MCF 10A (cell line): ENCODE measurements at regions of chr9 and their contacts with region 1.

Region 1: DNA sequence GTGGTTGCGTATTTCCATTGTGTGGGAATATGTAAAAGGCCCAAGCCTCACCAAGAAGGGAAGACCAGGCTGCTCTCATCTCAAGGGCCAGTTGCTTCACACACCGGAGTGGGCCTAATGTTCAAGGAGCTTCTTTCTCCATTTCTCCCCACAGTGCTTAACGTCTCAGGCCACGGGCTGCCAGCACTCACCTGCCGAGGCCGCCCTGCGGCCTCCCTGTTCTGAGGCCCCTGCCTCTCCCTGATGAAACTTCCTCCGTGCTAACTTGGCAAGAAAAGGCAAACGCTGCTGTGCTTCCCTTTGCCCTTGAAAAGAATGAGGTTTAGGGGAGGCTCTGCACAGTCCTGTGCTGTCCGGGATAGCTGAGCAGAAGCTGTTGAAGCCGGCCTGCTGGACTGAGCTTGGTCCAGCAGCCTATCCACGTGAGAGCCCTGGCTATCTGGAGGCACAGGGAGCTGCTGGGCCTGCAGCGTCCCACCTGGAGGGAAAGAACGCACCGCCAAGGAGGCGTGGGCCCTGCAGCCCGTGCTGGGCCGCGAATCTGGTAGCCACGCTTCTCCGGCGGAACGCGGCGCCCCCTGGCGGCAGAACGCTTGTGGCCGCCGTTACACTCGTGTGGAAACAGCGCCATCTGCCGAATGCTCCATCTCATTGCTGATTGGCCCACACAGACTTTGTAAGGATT is 73.5 kb upstream of the PRSS3 start:
- DNase-seq: peak; percentile 82
- H3K4me3 Mint-ChIP-seq: no peak overlapping the region
- H3K27ac Mint-ChIP-seq: no peak overlapping the region
- H3K4me1 Mint-ChIP-seq: no peaks in the 10 kb centered on the region
- H3K27me3 Mint-ChIP-seq: peaks cover 24% of the 10 kb centered on the region
- CTCF ChIP-seq: peak; percentile 100

Region 2: GRCh38 chr9:33225319-33226149 is 496.3 kb before region 1 on chr9:
- CTCF ChIA-PET with region 1: interaction called, 4 read pairs
- POLR2A ChIA-PET with region 1: no interaction called
- intact Hi-C with region 1: loop called (anchors 2 kb)
- DNase-seq: peak; percentile 83
- H3K4me3 Mint-ChIP-seq: no peak overlapping the region
- H3K27ac Mint-ChIP-seq: no peak overlapping the region
- H3K4me1 Mint-ChIP-seq: peaks cover 33% of the 10 kb centered on the region
- H3K27me3 Mint-ChIP-seq: no peaks in the 10 kb centered on the region
- CTCF ChIP-seq: peak; percentile 52

Region 3: GRCh38 chr9:33524306-33524947 is 197.4 kb before region 1 on chr9:
- CTCF ChIA-PET with region 1: interaction called, 9 read pairs
- POLR2A ChIA-PET with region 1: no interaction called
- intact Hi-C with region 1: loop called (anchors 5 kb)
- DNase-seq: peak; percentile 33
- H3K4me3 Mint-ChIP-seq: peak overlapping the region; percentile 96
- H3K27ac Mint-ChIP-seq: peak overlapping the region; percentile 76
- H3K4me1 Mint-ChIP-seq: no peaks in the 10 kb centered on the region
- H3K27me3 Mint-ChIP-seq: no peaks in the 10 kb centered on the region
- CTCF ChIP-seq: no peak

Region 4: GRCh38 chr9:33623658-33624586 is 97.9 kb before region 1 on chr9:
- CTCF ChIA-PET with region 1: interaction called, 227 read pairs
- POLR2A ChIA-PET with region 1: interaction called, 13 read pairs
- intact Hi-C with region 1: loop called (anchors 1 kb)
- DNase-seq: peak; percentile 85
- H3K4me3 Mint-ChIP-seq: no peak overlapping the region
- H3K27ac Mint-ChIP-seq: no peak overlapping the region
- H3K4me1 Mint-ChIP-seq: peaks cover 31% of the 10 kb centered on the region
- H3K27me3 Mint-ChIP-seq: no peaks in the 10 kb centered on the region
- CTCF ChIP-seq: peak; percentile 78

Region 5: GRCh38 chr9:33628865-33629410 is 92.9 kb before region 1 on chr9:
- CTCF ChIA-PET with region 1: interaction called, 227 read pairs
- POLR2A ChIA-PET with region 1: interaction called, 13 read pairs
- intact Hi-C with region 1: loop called (anchors 1 kb)
- DNase-seq: no peak
- H3K4me3 Mint-ChIP-seq: no peak overlapping the region
- H3K27ac Mint-ChIP-seq: no peak overlapping the region
- H3K4me1 Mint-ChIP-seq: peaks cover 2% of the 10 kb centered on the region
- H3K27me3 Mint-ChIP-seq: peaks cover 47% of the 10 kb centered on the region
- CTCF ChIP-seq: no peak

Region 6: DNA sequence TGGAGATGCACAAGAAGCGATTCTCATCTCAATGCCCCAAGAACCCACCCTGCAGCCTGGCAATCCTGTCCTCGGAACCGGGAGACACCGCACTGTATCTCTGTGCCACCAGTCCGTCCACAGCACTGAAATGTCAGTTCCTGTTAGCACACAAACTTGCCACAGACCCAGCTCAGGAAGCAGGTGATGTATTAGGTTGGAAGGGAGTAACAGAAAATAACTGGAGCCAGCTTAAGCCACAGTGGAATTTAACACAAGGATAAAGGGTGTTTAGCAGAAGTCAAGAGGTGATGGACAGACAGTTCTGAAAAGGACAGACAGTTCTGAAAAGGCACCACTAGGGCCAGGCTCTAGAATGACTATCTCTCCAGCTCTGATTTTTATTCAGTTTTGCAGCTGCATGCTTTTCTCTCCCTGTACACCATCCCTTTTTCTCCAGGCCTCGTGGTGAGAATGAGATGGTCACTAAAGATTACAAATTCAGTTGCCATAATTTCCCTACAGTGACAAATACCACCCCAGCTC is 83.4 kb before region 1 on chr9:
- CTCF ChIA-PET with region 1: interaction called, 13 read pairs
- POLR2A ChIA-PET with region 1: no interaction called
- intact Hi-C with region 1: no loop called
- DNase-seq: no peak
- H3K4me3 Mint-ChIP-seq: no peak overlapping the region
- H3K27ac Mint-ChIP-seq: no peak overlapping the region
- H3K4me1 Mint-ChIP-seq: no peaks in the 10 kb centered on the region
- H3K27me3 Mint-ChIP-seq: peaks cover 99% of the 10 kb centered on the region
- CTCF ChIP-seq: no peak

Region 7: GRCh38 chr9:33708441-33708840 is 13.4 kb before region 1 on chr9:
- CTCF ChIA-PET with region 1: interaction called, 14 read pairs
- POLR2A ChIA-PET with region 1: no interaction called
- intact Hi-C with region 1: no loop called
- DNase-seq: no peak
- H3K4me3 Mint-ChIP-seq: no peak overlapping the region
- H3K27ac Mint-ChIP-seq: no peak overlapping the region
- H3K4me1 Mint-ChIP-seq: no peaks in the 10 kb centered on the region
- H3K27me3 Mint-ChIP-seq: peaks cover 24% of the 10 kb centered on the region
- CTCF ChIP-seq: no peak

Region 8: DNA sequence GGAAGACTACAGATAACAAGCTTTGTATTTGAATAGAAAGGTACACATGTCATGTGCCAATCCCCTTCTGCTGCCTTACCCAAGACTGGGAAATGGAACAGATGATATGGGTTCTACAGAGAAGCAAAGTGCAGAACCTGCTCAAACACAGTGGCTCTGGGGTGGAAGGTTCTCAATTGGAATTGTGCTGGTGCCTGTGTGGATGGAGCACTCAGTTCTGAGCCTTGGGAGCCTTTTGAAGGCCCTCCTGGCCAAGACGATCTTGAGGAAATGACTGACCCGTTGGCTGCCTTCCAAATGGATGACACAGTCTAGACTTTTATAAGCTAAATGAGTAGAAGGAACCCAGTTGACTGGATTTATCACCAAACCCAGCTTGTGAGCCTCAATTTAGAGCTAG is 69.3 kb after region 1 on chr9:
- CTCF ChIA-PET with region 1: no interaction called
- POLR2A ChIA-PET with region 1: no interaction called
- intact Hi-C with region 1: no loop called
- DNase-seq: peak; percentile 82
- H3K4me3 Mint-ChIP-seq: no peak overlapping the region
- H3K27ac Mint-ChIP-seq: no peak overlapping the region
- H3K4me1 Mint-ChIP-seq: peaks cover 13% of the 10 kb centered on the region
- H3K27me3 Mint-ChIP-seq: peaks cover 15% of the 10 kb centered on the region
- CTCF ChIP-seq: no peak